Activated naive CD4-positive, alpha-beta T cell treated with anti-CD3 and anti-CD28 coated beads for 36 hours (primary cell): ENCODE measurements at regions of chr5 and their contacts with region 1.

Region 1: GRCh38 chr5:93588352-93589105 is 5.5 kb downstream of the NR2F1 start:
- DNase-seq: no peak
- H3K4me3 Mint-ChIP-seq: peak overlapping the region; percentile 22
- H3K27ac Mint-ChIP-seq: no peak overlapping the region
- H3K4me1 Mint-ChIP-seq: peaks cover 27% of the 10 kb centered on the region
- H3K27me3 Mint-ChIP-seq: peaks cover 64% of the 10 kb centered on the region

Region 2: GRCh38 chr5:93602241-93603077 is 13.9 kb after region 1 on chr5:
- CTCF ChIA-PET with region 1: interaction called, 9 read pairs
- intact Hi-C with region 1: loop called (anchors 1 kb)
- DNase-seq: no peak
- H3K4me3 Mint-ChIP-seq: no peak overlapping the region
- H3K27ac Mint-ChIP-seq: no peak overlapping the region
- H3K4me1 Mint-ChIP-seq: peaks cover 3% of the 10 kb centered on the region
- H3K27me3 Mint-ChIP-seq: peaks cover 30% of the 10 kb centered on the region